Activated naive CD4-positive, alpha-beta T cell treated with anti-CD3 and anti-CD28 coated beads for 36 hours (primary cell): ENCODE measurements at regions of chr15 and their contacts with region 1.

Region 1: DNA sequence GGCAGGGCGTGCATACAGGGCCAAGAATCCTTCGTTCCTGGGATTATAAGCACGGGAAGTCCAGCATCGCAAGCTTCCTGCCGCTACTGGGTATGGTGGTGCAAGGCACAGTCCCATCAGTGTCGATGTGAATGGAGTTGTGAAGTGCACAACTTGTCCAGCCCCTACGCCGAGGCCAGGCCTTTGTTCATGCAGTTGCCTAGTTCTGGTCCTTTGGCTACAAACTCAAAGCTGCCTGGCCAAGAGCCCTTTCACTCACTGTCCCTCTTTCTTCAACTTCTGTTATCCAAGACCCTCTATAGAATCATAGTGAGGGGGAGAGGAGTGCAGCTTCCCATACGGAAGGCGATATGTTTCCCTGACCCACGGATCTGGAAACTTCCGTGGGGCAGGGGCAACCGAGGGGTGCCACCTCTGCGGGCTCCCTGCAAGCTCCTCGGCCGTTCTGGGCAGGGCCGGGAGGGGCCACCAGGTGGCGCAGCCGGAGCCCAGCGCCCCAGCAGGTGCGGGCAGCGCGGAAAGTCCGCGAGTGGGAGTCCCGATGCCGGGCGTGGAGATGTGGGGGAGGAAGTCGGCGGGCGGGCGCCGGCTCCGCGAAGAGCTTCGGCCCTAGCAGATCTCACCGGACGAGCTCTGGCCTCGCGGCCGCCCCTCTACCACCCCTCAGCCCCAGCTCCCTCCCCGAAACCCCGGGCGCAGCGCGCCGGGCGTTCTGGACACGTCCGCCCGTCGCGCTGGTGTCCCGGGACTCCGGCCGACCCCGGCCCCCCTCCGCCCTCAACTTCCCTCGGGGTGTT is 693 bp downstream of the RASGRP1 start:
- DNase-seq: peak; percentile 88
- H3K4me3 Mint-ChIP-seq: peak overlapping the region; percentile 96
- H3K27ac Mint-ChIP-seq: peak overlapping the region; percentile 98
- H3K4me1 Mint-ChIP-seq: peaks cover 55% of the 10 kb centered on the region
- H3K27me3 Mint-ChIP-seq: no peaks in the 10 kb centered on the region

Region 2: DNA sequence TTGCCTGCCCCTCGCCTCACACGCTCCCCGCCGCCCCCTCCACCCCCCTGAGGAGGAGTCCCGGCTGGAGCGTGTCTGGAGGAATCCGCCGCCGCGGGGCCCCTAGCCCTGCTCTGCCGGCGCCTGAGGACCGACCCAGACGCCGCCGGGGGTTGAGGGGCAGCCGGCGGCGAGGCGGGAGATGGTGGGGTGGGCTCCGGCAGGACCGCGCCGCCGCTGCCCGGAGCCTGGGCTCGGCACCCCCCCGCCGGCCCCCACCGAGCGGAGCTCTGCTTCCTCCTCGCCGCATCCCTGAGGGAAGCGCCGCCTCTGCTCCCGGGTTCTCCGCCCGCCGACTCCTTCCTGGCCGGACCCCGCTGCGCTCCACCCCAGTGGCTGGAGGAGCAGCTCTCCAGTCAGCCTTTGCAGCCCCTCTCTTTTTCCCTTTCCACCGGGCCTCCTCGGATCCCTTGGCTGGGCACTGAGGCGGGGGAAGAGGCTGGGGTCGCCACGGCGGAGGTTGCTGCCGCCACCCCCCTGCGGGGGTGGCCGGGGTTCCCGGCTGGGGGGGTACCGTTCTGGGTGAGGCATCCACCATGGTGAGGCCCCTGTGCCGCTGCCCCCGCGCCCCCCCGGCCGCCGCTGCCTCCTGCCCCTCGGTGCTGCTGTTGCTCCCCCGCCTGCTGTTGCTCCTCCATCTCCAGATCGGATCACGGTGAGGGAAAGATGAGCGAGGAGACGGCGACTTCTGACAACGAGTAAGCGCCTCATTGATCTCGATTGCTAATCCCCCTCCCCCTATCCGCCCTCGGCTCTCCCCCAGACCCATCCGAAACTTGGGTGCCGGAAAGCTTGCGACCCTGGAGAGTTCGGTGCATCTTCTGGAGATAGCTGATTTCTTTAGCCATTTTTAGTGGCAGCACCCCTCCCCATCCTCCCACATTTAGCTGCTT is 311.2 kb before region 1 on chr15 and contains the start of gene SPRED1:
- CTCF ChIA-PET with region 1: no interaction called
- intact Hi-C with region 1: loop called (anchors 5 kb)
- DNase-seq: peak; percentile 30
- H3K4me3 Mint-ChIP-seq: peak within 1 kb of the TSS; percentile 84
- H3K27ac Mint-ChIP-seq: no peak within 1 kb of the TSS
- H3K4me1 Mint-ChIP-seq: peaks cover 19% of the 10 kb centered on the region
- H3K27me3 Mint-ChIP-seq: peaks cover 13% of the 10 kb centered on the region
- total RNA-seq, gene SPRED1: 0.62 to 0.74 TPM

Region 3: GRCh38 chr15:38508647-38509046 is 55.3 kb before region 1 on chr15:
- CTCF ChIA-PET with region 1: interaction called, 11 read pairs
- intact Hi-C with region 1: loop called (anchors 1 kb)
- DNase-seq: peak; percentile 37
- H3K4me3 Mint-ChIP-seq: no peak overlapping the region
- H3K27ac Mint-ChIP-seq: peak overlapping the region; percentile 80
- H3K4me1 Mint-ChIP-seq: peaks cover 24% of the 10 kb centered on the region
- H3K27me3 Mint-ChIP-seq: no peaks in the 10 kb centered on the region

Region 4: DNA sequence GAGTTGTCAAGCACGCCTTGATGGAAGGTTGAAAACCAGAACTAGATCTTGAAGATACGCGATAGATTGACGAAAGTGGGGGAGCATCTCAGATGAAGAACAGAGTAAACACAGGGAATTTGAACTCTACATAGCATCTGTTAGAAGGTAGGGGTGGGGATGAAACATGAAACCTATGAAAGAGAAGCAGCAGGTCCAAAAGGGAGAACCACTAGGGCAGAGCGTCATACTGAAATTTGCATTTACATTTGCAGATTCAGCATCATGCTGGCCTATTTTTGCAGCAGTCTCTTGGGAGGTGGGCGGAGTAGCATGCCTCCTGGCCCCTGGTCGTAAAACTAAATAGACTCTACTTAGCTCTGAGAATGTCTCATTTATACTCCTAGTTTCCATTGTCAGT is 46.8 kb after region 1 on chr15:
- CTCF ChIA-PET with region 1: interaction called, 21 read pairs
- intact Hi-C with region 1: loop called (anchors 1 kb)
- DNase-seq: peak; percentile 32
- H3K4me3 Mint-ChIP-seq: no peak overlapping the region
- H3K27ac Mint-ChIP-seq: peak overlapping the region; percentile 61
- H3K4me1 Mint-ChIP-seq: peaks cover 40% of the 10 kb centered on the region
- H3K27me3 Mint-ChIP-seq: no peaks in the 10 kb centered on the region

Region 5: DNA sequence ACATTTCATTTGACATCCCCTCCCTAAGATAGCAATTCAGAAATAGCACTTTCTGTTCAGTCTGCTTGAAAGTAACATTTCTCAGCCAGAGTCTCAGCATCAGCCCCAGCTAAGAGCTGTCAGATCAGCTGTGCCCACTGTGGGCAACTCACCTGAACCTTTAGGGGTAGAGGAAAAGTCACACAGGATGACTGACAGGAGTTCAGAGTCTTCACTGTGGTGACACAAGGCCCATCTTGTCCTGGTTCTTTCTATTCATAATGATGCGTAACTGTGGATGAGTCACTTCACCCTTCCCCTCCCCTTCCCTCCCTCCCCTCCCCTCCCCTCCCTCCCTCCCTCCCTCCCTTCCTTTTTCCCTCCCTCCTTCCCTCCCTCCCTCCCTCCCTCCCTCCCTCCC is 96.8 kb after region 1 on chr15:
- CTCF ChIA-PET with region 1: interaction called, 10 read pairs
- intact Hi-C with region 1: no loop called
- DNase-seq: peak; percentile 66
- H3K4me3 Mint-ChIP-seq: peak overlapping the region; percentile 37
- H3K27ac Mint-ChIP-seq: peak overlapping the region; percentile 71
- H3K4me1 Mint-ChIP-seq: peaks cover 73% of the 10 kb centered on the region
- H3K27me3 Mint-ChIP-seq: no peaks in the 10 kb centered on the region

Region 6: DNA sequence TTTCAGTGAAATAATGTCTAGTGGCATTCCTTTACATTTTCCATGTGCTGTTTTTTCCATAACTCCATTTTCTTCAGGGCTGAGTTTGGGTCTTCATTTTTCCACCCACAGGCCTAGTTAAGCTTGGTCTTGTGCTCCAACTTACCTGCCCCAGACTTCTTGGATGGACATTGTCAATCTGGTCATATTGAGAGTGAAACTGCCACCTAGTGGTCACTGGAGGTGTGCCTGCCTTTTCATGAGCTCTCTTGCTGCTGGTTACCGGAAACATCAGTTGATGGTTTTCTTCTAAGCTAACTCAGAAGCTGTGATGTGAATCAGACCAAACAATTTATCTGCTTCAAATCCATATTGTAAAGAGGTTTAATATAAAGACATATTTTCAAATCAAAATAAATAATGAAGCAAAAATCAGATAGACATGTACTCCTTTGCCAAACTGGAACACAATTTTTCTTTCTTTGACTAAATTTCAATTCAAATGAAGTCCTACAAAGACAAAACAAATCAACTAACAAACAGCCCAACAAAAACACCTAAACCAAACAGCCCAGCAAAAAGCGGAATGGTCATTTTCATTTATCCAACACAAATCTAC is 135.8 kb after region 1 on chr15:
- CTCF ChIA-PET with region 1: interaction called, 352 read pairs
- intact Hi-C with region 1: no loop called
- DNase-seq: peak; percentile 83
- H3K4me3 Mint-ChIP-seq: no peak overlapping the region
- H3K27ac Mint-ChIP-seq: peak overlapping the region; percentile 41
- H3K4me1 Mint-ChIP-seq: peaks cover 47% of the 10 kb centered on the region
- H3K27me3 Mint-ChIP-seq: no peaks in the 10 kb centered on the region

Region 7: DNA sequence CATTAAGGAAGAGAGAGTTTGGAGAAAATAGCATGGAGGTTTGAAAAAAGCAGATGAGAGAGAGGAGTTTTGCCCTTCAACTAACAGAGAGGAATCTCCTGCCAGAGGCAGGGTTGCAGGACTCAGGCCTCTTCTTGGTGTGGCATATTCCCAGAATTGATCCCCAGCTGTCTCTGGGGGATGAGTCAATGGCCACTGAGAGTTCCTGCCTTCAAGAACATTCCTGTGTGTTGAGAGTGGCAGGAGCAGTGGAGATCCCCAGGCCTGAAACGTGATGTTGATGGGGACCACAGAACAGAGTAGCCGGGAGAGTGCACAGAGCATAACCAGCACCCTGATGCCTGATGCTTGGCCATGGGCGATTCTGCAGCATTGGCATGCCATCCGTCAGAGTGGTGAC is 668.6 kb after region 1 on chr15:
- CTCF ChIA-PET with region 1: no interaction called
- intact Hi-C with region 1: no loop called
- DNase-seq: no peak
- H3K4me3 Mint-ChIP-seq: no peak overlapping the region
- H3K27ac Mint-ChIP-seq: no peak overlapping the region
- H3K4me1 Mint-ChIP-seq: no peaks in the 10 kb centered on the region
- H3K27me3 Mint-ChIP-seq: no peaks in the 10 kb centered on the region